Activated naive CD4-positive, alpha-beta T cell treated with anti-CD3 and anti-CD28 coated beads for 36 hours (primary cell): ENCODE measurements at regions of chr5 and their contacts with region 1.

Region 1: GRCh38 chr5:79990598-79991507 is at the start of gene MTX3:
- DNase-seq: peak; percentile 93
- H3K4me3 Mint-ChIP-seq: peak within 1 kb of the TSS; percentile 84
- H3K27ac Mint-ChIP-seq: peak within 1 kb of the TSS; percentile 92
- H3K4me1 Mint-ChIP-seq: peaks cover 40% of the 10 kb centered on the region
- H3K27me3 Mint-ChIP-seq: no peaks in the 10 kb centered on the region
- total RNA-seq, gene MTX3: 5.7 to 6.1 TPM

Region 2: DNA sequence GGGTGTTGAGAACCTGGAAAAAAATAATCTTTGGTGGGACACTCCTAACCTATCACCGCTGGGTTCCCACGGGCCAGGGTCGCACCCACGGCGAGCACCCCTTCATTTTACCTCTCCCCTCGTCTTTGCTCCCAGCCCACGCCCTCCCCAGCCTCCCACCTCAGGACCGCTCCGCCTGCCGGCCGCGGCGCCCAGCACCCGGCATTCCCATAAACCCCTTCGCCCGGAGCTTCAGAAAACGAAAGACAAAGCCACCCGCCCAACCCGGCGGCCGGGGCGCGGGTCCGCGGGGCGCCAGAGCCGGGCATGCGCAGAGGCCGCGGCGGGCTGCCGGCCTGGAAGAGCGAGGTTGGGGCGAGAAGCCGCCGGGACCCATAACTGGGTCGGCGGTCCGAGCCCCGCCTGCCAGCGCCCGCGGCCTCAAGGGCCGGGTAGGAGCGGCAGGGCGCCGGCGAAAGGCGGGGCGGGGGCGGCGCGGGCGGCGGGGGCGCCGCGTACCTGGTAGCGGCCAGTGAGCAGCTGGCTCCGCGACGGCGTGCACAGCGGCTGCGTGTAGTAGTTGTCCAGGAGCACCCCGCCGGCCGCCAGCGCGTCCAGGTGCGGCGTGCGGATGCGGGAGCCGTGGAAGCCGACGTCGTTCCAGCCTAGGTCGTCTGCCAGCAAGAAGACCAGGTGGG is 1006.3 kb before region 1 on chr5:
- CTCF ChIA-PET with region 1: no interaction called
- intact Hi-C with region 1: loop called (anchors 10 kb)
- DNase-seq: peak; percentile 81
- H3K4me3 Mint-ChIP-seq: peak overlapping the region; percentile 84
- H3K27ac Mint-ChIP-seq: peak overlapping the region; percentile 87
- H3K4me1 Mint-ChIP-seq: peaks cover 35% of the 10 kb centered on the region
- H3K27me3 Mint-ChIP-seq: no peaks in the 10 kb centered on the region

Region 3: DNA sequence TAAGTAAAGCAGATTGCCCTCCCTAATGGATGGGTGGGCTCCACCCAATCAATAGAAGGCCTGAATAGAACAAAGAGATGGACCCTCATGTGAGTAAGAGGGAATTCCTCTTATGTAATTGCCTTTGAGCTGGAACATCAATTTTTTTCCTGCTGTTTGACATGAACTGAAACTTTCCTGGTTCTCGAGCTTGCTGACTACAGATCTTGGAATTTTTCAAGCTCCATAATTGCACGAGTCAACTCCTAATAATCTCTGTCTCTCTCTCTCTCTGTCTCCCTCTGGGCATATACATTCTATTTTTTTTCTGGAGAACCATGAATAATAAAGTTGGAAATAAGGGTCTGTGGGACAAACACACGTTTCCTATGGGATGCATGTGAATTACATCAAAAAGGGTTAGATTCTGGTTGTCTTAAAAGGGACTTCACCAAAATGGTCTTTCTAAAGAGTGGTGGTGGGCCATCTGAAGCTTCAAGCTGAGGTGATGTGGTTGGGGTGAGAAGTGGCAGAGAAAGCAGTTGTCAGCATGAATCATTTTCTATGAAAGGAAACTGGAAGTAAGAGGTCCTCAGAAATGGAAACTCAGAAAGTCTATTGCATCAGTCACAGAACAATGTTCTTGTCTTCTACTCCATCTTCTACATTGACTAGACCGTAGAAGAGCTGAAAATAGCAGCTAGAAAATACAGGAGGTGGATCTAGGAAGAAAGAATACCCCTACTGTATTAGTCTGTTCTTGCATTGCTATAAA is 429.9 kb before region 1 on chr5:
- CTCF ChIA-PET with region 1: no interaction called
- intact Hi-C with region 1: loop called (anchors 1 kb)
- DNase-seq: peak; percentile 62
- H3K4me3 Mint-ChIP-seq: peak overlapping the region; percentile 4
- H3K27ac Mint-ChIP-seq: peak overlapping the region; percentile 99
- H3K4me1 Mint-ChIP-seq: peaks cover 40% of the 10 kb centered on the region
- H3K27me3 Mint-ChIP-seq: no peaks in the 10 kb centered on the region

Region 4: DNA sequence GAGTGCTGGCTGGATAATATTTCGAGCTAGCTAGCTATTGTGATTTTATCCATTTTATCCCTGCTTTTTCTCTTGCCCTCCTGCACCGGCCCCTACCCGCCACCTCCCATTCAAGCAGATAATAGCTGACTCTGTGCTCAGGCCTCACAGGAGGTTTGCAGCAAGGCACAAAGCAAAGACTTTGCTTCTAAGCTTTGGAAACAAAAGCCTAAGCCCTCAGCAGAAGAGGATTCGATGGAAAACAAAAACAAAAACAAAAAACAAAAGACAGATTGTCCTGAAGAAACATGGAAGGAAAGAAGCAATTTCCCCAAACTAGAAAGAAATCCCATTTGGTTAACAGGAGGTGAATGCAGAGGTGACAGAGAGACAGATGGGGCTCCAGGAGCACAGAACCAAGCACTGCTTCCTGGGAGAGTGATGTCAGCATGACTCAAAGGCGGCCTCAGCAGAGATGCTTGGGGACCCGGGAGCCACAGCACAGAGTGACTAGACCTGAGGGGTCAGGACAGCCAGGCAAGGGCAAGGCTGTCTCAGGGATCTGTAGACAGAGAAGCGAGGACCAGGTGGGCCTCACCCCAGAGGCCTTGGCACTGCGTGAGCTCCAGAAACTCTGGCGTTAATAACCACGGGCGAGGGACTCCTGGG is 28.2 kb before region 1 on chr5:
- CTCF ChIA-PET with region 1: no interaction called
- intact Hi-C with region 1: loop called (anchors 1 kb)
- DNase-seq: peak; percentile 61
- H3K4me3 Mint-ChIP-seq: no peak overlapping the region
- H3K27ac Mint-ChIP-seq: peak overlapping the region; percentile 33
- H3K4me1 Mint-ChIP-seq: peaks cover 16% of the 10 kb centered on the region
- H3K27me3 Mint-ChIP-seq: peaks cover 17% of the 10 kb centered on the region

Region 5: GRCh38 chr5:80191991-80192398 is 201.1 kb after region 1 on chr5:
- CTCF ChIA-PET with region 1: no interaction called
- intact Hi-C with region 1: loop called (anchors 5 kb)
- DNase-seq: peak; percentile 59
- H3K4me3 Mint-ChIP-seq: peak overlapping the region; percentile 69
- H3K27ac Mint-ChIP-seq: peak overlapping the region; percentile 97
- H3K4me1 Mint-ChIP-seq: peaks cover 80% of the 10 kb centered on the region
- H3K27me3 Mint-ChIP-seq: no peaks in the 10 kb centered on the region

Region 6: DNA sequence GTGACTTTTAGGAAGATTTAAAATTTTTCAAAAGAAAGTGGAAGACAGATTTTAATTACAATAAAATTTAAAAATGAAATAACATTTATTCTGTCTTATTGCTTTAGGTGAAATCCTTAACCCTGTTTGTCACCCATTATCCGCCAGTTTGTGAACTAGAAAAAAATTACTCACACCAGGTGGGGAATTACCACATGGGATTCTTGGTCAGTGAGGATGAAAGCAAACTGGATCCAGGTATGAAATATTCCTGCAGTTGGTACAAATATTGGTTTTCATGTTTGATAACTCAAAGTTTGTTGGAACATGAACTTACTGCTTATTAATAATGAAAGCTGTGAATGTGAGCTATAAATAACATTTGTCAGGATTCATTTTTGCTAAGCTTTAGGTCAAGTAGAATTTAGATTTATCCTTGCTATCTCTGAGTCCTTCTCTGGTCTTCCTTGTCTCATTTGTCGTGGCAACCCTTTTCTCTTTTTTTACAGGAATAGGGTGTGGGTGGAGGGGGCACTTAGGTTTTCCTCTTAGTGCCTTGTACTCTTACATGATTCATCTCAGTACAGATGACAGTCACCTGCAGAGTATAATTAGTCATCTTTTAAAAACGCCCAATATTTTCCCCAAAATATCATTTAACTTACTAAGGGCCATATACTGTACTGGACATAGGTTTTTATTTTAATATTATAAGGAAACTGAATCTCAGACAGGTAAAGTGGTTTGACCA is 874.0 kb after region 1 on chr5:
- CTCF ChIA-PET with region 1: no interaction called
- intact Hi-C with region 1: loop called (anchors 5 kb)
- DNase-seq: peak; percentile 30
- H3K4me3 Mint-ChIP-seq: no peak overlapping the region
- H3K27ac Mint-ChIP-seq: peak overlapping the region; percentile 21
- H3K4me1 Mint-ChIP-seq: peaks cover 47% of the 10 kb centered on the region
- H3K27me3 Mint-ChIP-seq: no peaks in the 10 kb centered on the region